ENCODE measurements at regions of chr1 and their contacts with region 1.

Region 1: DNA sequence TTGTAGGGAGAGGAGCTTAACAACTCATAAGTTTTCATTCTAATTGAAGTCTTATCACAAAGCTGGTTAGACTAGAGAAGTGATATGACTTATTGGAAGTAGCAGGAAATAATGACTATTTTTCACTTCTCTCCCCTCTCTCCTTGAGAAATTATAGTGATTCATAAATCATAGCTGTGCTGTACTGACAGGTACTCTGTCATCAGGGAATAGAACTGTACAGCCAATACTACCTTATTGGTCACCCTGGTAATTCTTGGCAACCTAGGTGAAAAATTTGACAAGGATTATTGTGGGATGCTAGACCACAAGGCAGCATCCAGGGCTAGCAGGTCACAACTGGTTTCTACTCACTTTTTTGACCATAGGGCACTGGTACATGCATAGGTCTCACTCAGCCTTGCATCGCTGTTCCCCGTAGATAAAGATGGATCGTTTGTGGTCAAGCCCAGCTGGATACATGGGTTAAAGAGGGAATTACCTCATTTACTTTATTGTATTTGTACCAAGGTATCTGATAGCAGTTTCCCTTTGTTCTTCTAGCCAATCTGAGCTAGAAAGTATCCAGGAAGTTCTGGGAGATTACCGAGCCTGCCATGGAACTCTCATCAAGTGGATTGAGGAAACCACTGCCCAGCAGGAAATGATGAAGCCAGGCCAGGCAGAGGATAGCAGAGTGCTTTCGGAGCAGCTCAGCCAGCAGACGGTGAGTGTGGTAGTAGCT is 113.6 kb downstream of the MACF1 start:
- DNase-seq: no peak
- ATAC-seq: no peak
- H3K4me3 ChIP-seq: no peak overlapping the region
- H3K27ac ChIP-seq: no peak overlapping the region
- H3K4me1 ChIP-seq: no peaks in the 10 kb centered on the region
- H3K27me3 ChIP-seq: no peaks in the 10 kb centered on the region
- CTCF ChIP-seq: no peak
- EP300 ChIP-seq: no peak
- POLR2A ChIP-seq: no peak
- RAD21 ChIP-seq: no peak

Region 2: GRCh38 chr1:39369565-39369964 is 51.5 kb after region 1 on chr1:
- CTCF ChIA-PET with region 1: no interaction called
- POLR2A ChIA-PET with region 1: no interaction called
- in situ Hi-C with region 1: loop called (anchors 5 kb)
- intact Hi-C with region 1: no loop called
- DNase-seq: no peak
- ATAC-seq: no peak
- H3K4me3 ChIP-seq: no peak overlapping the region
- H3K27ac ChIP-seq: no peak overlapping the region
- H3K4me1 ChIP-seq: peaks cover 13% of the 10 kb centered on the region
- H3K27me3 ChIP-seq: no peaks in the 10 kb centered on the region
- CTCF ChIP-seq: no peak
- EP300 ChIP-seq: no peak
- POLR2A ChIP-seq: no peak
- RAD21 ChIP-seq: no peak

Measured in HepG2 (cell line).